GM12878 (cell line): ENCODE measurements at regions of chr5 and their contacts with region 1.

Region 1: DNA sequence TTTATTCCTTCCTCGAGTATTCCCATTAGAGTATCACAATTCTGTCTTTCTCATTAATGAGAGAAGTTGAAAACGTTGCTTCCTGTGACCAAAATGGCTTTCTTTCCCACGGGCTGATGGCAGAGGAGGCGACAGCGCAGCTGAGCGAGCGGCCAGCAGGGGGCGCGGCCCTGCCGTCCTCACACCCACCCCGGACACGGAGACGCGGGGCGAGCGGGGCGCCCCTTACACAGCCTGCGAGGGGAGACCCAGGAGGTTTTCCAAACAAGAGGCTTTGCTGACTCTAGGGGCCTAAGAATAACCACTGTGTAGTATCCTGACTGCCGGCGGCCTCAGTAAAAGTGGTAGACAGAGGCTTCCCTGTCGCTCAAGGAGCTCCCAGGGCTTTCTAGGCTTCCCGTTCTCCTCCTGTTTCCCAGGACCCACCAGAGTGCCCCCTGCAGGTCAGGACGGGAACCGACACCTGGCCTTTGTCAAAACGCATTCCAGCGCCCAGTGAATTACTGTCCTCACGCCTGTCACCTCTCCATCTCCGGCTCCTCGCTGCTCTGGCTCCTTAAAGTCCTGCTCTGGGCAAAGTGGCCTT is 27.3 kb upstream of the FGF1 start:
- DNase-seq: peak; percentile 61
- ATAC-seq: peak; percentile 99
- H3K4me3 ChIP-seq: peak overlapping the region; percentile 53
- H3K27ac ChIP-seq: peak overlapping the region; percentile 50
- H3K4me1 ChIP-seq: no peaks in the 10 kb centered on the region
- H3K27me3 ChIP-seq: no peaks in the 10 kb centered on the region; a peak in 1 of 4 replicates
- CTCF ChIP-seq: peak; percentile 86 to 94 (median 91)
- EP300 ChIP-seq: no peak
- POLR2A ChIP-seq: no peak
- RAD21 ChIP-seq: peak; percentile 43

Region 2: DNA sequence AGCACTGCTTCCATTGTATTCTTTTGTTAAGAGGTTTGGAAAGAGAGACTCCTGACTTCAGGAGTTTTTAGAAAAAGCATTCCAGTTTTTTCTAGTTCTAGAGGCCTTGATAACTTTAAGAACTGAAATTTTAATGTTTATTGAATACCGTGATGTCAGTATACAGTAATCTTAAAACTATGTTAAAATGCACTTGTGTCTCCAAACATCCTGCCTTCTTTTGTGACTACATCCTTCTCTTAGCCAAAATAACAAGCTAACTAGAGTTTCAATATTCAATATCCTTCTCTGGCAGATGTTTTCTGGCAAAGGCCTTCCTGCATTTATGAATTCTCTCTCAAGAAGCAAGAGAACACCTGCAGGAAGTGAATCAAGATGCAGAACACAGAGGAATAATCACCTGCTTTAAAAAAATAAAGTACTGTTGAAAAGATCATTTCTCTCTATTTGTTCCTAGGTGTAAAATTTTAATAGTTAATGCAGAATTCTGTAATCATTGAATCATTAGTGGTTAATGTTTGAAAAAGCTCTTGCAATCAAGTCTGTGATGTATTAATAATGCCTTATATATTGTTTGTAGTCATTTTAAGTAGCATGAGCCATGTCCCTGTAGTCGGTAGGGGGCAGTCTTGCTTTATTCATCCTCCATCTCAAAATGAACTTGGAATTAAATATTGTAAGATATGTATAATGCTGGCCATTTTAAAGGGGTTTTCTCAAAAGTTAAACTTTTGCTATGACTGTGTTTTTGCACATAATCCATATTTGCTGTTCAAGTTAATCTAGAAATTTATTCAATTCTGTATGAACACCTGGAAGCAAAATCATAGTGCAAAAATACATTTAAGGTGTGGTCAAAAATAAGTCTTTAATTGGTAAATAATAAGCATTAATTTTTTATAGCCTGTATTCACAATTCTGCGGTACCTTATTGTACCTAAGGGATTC is 561.5 kb before region 1 on chr5:
- CTCF ChIA-PET with region 1: interaction called, 10 read pairs
- POLR2A ChIA-PET with region 1: no interaction called
- RAD21 ChIA-PET with region 1: no interaction called
- SMC1A ChIA-PET with region 1: no interaction called
- in situ Hi-C with region 1: no loop called
- intact Hi-C with region 1: loop called (anchors 5 kb)
- DNase-seq: peak; percentile 2
- ATAC-seq: peak; percentile 72
- H3K4me3 ChIP-seq: no peak overlapping the region
- H3K27ac ChIP-seq: no peak overlapping the region
- H3K4me1 ChIP-seq: no peaks in the 10 kb centered on the region
- H3K27me3 ChIP-seq: no peaks in the 10 kb centered on the region
- CTCF ChIP-seq: peak; percentile 61 to 85 (median 75); a peak in 5 of 6 replicates
- EP300 ChIP-seq: no peak
- POLR2A ChIP-seq: no peak
- RAD21 ChIP-seq: peak; percentile 82

Region 3: DNA sequence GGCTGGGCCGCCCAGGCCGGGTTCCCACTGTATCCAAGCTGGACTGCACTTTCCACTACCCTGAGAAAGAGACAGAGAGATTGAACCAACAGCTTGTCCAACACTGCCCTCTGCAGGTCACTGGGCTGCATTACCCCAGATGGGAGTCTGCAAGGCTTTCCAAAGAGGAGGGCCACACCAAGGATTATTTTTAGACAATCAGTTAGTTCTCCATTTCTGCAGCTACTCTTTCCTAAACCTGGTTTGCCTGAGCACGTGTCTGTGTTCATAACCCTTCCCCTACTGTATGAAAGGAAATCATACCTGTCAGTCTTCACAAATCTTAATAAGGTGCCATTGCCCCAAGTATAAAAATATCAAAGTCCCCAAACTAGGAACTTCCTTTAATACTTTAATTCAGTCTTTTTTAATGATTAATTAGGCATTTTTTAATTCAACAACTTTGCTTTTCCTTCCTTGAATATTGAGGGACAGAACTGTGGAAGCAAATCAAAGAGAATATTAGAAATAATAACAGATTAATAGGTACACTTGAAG is 14.0 kb before region 1 on chr5:
- CTCF ChIA-PET with region 1: interaction called, 34 read pairs
- POLR2A ChIA-PET with region 1: no interaction called
- RAD21 ChIA-PET with region 1: no interaction called
- SMC1A ChIA-PET with region 1: interaction called, 7 read pairs
- in situ Hi-C with region 1: no loop called
- intact Hi-C with region 1: no loop called
- DNase-seq: peak; percentile 31
- ATAC-seq: peak; percentile 97
- H3K4me3 ChIP-seq: no peak overlapping the region
- H3K27ac ChIP-seq: no peak overlapping the region
- H3K4me1 ChIP-seq: no peaks in the 10 kb centered on the region
- H3K27me3 ChIP-seq: no peaks in the 10 kb centered on the region
- CTCF ChIP-seq: peak; percentile 89 to 96 (median 94)
- EP300 ChIP-seq: no peak
- POLR2A ChIP-seq: no peak
- RAD21 ChIP-seq: peak; percentile 95

Region 4: GRCh38 chr5:142769741-142770631 is 56.8 kb after region 1 on chr5 and contains the start of gene ARHGAP26:
- CTCF ChIA-PET with region 1: interaction called, 15 read pairs
- POLR2A ChIA-PET with region 1: no interaction called
- RAD21 ChIA-PET with region 1: interaction called, 4 read pairs
- SMC1A ChIA-PET with region 1: no interaction called
- in situ Hi-C with region 1: no loop called
- intact Hi-C with region 1: no loop called
- DNase-seq: peak; percentile 70
- ATAC-seq: peak; percentile 99
- H3K4me3 ChIP-seq: peak within 1 kb of the TSS; percentile 85
- H3K27ac ChIP-seq: no peak within 1 kb of the TSS
- H3K4me1 ChIP-seq: peaks cover 5% of the 10 kb centered on the region; the same call in 1 of the 2 replicates
- H3K27me3 ChIP-seq: peaks cover 0 to 3% of the 10 kb centered on the region in 2 experiments; a peak in 3 of 4 replicates
- CTCF ChIP-seq: peak in 2 of 3 experiments; percentile 17 to 35; a peak in 2 of 6 replicates
- EP300 ChIP-seq: no peak
- POLR2A ChIP-seq: peak; percentile 91
- RAD21 ChIP-seq: no peak
- polyA plus RNA-seq, gene ARHGAP26: 9.4 to 9.8 TPM